ENCODE measurements at regions of chr19 and their contacts with region 1.

Region 1: DNA sequence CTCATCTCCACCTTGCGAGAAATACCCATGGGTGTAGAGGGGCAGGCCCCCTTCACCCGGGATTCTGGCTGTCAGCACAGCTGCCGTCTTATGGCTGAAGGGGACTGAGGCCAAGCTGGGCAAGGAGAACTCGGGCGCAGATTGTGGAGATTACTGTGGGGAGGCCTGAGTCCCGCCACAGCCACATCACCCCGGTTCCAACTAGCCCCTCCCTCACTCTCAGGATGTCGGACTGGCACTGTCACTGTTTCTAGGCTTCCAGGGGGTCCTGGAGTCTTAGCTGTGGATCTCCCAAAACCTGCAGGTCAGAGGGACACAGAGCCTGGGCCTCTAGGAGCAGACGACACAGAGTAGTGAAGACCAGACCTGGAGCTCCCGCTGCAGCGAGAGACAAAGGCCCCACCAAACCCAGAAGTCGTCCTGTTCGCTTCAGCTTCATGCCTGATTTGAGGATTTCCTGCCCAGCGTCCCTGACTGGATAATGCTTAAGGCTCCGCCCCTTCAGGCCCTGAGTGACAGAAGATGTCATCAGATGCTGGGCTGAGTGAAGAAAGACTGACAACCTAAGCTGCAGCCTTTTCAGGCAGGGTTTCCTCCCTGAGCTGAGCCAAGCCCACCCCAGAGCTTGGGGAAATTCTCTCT is 55.8 kb downstream of the ZNF93 start:
- DNase-seq: no peak
- ATAC-seq: no peak
- H3K4me3 ChIP-seq: no peak overlapping the region
- H3K4me3 Mint-ChIP-seq: no peak overlapping the region
- H3K27ac ChIP-seq: no peak overlapping the region
- H3K27ac Mint-ChIP-seq: no peak overlapping the region
- H3K4me1 ChIP-seq: no peaks in the 10 kb centered on the region
- H3K4me1 Mint-ChIP-seq: peaks cover 3% of the 10 kb centered on the region
- H3K27me3 ChIP-seq: no peaks in the 10 kb centered on the region
- H3K27me3 Mint-ChIP-seq: no peaks in the 10 kb centered on the region
- CTCF ChIP-seq: no peak

Region 2: DNA sequence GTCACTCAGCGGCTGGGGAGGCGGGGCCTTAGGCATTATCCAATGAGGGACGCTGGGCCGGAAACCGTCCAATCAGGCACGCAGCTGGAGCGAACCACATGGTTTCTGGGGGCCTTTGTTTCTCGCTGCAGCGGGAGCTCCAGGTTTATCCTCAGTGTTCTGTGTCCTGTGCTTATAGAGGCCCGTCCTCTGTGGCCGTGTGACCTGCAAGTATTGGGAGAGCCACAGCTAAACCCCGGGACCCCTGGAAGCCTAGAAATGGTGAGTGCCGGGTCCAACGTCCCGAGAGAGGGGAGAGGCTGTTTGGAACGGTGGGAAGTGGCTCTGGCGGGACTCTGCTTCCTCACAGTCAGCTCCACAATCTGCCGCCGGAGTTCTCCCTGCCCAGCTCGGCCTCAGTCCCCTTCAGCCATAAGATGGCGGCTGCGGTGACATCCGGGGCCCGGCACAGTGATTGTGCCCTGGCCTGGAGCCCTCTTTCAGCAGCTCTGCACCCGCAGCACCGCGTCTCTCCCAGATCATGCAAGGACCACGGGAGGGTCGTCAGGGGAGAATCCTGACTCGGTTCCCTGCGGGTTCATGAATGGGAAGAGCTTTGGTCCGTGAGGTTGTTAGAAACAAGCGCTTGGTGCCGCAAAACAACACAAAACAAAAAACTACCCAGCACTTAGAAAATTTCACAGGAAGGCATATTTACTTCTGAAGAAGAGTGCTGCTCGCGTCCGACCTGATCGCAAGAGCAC is 90.6 kb before region 1 on chr19 and contains the start of gene ZNF253:
- CTCF ChIA-PET with region 1: no interaction called
- POLR2A ChIA-PET with region 1: no interaction called
- intact Hi-C with region 1: loop called in 1 of 2 experiments (anchors 10 kb)
- DNase-seq: peak; percentile 88 to 97 (median 95)
- ATAC-seq: peak; percentile 93
- H3K4me3 ChIP-seq: peak within 1 kb of the TSS; percentile 89 to 99
- H3K4me3 Mint-ChIP-seq: peak within 1 kb of the TSS; percentile 100
- H3K27ac ChIP-seq: peak within 1 kb of the TSS; percentile 89 to 91
- H3K27ac Mint-ChIP-seq: peak within 1 kb of the TSS; percentile 98
- H3K4me1 ChIP-seq: peaks cover 22% of the 10 kb centered on the region
- H3K4me1 Mint-ChIP-seq: peaks cover 39% of the 10 kb centered on the region
- H3K27me3 ChIP-seq: no peaks in the 10 kb centered on the region
- H3K27me3 Mint-ChIP-seq: no peaks in the 10 kb centered on the region
- CTCF ChIP-seq: no peak
- total RNA-seq, gene ZNF253: 2.6 to 3.2 TPM

Region 3: DNA sequence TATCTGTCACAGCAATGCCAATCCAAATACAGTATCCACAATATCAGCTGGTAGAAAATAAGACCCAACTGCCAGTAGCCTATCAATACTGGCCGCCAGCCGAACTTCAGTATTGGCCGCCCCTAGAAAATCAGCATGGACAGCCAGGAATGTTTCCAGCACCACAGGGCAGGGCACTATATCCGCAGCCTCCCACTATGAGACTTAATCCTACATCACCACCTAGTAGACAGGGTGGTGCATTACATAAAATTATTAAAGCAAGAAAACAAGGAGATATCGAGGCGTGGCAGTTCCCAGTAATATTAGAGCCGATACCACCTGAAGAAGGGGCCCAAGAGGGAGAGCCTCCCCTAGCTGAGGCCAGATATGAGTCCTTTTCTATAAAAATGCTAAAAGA is 321.8 kb after region 1 on chr19:
- CTCF ChIA-PET with region 1: no interaction called
- POLR2A ChIA-PET with region 1: no interaction called
- intact Hi-C with region 1: no loop called
- DNase-seq: peak in 1 of 9 experiments; percentile 61
- ATAC-seq: no peak
- H3K4me3 ChIP-seq: no peak overlapping the region
- H3K4me3 Mint-ChIP-seq: no peak overlapping the region
- H3K27ac ChIP-seq: no peak overlapping the region
- H3K27ac Mint-ChIP-seq: no peak overlapping the region
- H3K4me1 ChIP-seq: no peaks in the 10 kb centered on the region
- H3K4me1 Mint-ChIP-seq: no peaks in the 10 kb centered on the region
- H3K27me3 ChIP-seq: no peaks in the 10 kb centered on the region
- H3K27me3 Mint-ChIP-seq: no peaks in the 10 kb centered on the region
- CTCF ChIP-seq: no peak